ENCODE measurements at regions of chr7 and their contacts with region 1.

Region 1: GRCh38 chr7:111561885-111562732 is at the start of gene IMMP2L:
- DNase-seq: peak; percentile 69 to 85
- ATAC-seq: peak; percentile 90 to 94
- H3K4me3 ChIP-seq: peak within 1 kb of the TSS; percentile 65
- H3K27ac ChIP-seq: peak within 1 kb of the TSS; percentile 88 to 99
- H3K4me1 ChIP-seq: peaks cover 26% of the 10 kb centered on the region
- CTCF ChIP-seq: peak; percentile 66
- EP300 ChIP-seq: no peak
- POLR2A ChIP-seq: peak; percentile 43
- RAD21 ChIP-seq: peak; percentile 65 to 75
- polyA plus RNA-seq, gene IMMP2L: 18.8 and 23.8 TPM in 2 replicates

Region 2: DNA sequence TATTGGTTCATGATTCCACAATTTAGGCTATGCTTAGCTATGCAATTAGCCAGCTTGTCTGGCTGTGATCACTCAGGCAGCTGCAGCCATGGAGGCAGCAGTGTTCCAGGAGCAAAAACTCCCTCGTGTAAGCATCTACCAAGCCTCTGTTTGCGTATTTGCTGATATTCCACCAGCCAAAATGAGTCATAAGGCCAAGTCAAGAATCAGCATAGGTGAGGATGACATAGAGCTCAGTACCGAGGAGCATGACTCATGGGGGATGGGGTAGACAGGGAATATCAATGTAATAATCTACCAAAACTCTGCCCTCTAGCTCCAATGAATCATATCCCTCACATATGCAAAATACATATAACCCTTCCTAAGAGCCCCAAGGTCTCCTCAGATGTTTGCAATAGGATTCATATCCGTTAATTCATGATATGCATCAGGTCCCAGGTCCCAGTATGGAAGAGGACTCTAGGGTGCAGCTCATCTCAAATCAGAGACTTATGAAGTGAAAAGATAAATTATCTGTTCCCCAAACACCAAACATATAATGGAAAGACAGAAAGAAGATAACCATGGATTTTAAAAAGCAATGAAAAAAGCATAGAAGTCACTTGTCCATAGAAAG is 63.0 kb before region 1 on chr7:
- CTCF ChIA-PET with region 1: interaction called, 9 read pairs
- POLR2A ChIA-PET with region 1: interaction called, 14 read pairs
- DNase-seq: peak; percentile 97
- ATAC-seq: peak; percentile 99 to 100
- H3K4me3 ChIP-seq: no peak overlapping the region
- H3K27ac ChIP-seq: peak overlapping the region; percentile 82 to 92
- H3K4me1 ChIP-seq: peaks cover 32% of the 10 kb centered on the region
- CTCF ChIP-seq: no peak
- EP300 ChIP-seq: peak; percentile 83 to 88; a peak in 4 of 5 replicates
- POLR2A ChIP-seq: no peak
- RAD21 ChIP-seq: peak; percentile 56 to 62; a peak in 4 of 5 replicates

Measured in A549 (cell line).